ENCODE measurements at regions of chr5 and their contacts with region 1.

Region 1: DNA sequence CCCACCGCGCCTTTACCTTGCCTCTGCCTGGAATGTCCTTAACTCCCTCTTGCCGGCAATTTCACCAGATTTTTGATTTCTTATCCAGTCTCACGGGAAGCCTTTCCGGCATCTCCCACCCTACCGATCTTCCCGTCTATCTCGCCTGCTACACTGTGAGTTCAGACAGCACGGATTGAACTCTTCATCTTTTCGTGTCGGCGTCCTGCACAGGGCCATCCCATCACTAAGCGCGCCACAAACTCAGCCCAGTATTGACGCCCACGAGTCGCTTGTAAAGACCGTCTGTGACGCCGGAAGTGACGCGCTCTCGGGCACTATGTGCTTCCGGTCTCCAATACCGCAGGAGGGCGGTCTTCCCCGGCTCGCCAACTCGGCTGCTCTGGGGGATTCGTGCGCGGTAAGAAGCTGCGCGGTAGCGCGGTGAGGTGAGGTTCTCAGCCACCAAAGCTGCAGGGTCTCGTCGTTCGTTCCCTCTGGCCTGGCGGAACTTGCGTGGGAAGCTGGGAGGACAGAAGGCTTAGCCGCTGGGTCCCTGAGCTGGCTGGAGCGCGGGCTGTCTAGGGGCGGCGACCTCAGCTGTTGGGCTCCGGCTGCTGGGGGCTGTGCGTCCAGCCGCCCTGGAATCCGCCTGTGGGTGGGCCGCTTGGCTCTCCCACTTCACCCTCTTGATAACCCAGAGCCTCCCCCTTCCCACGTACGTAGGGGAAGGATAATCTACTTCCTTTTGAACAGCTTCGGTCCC is at the start of gene ZCCHC9:
- DNase-seq: peak; percentile 84 to 94 (median 90)
- ATAC-seq: peak; percentile 96
- H3K4me3 ChIP-seq: peak within 1 kb of the TSS; percentile 75
- H3K4me3 Mint-ChIP-seq: peak within 1 kb of the TSS; percentile 91 to 99 (median 96)
- H3K27ac ChIP-seq: peak within 1 kb of the TSS; percentile 96
- H3K27ac Mint-ChIP-seq: peak within 1 kb of the TSS; percentile 92 to 99 (median 98)
- H3K4me1 ChIP-seq: peaks cover 14 to 21% of the 10 kb centered on the region in 2 donors
- H3K4me1 Mint-ChIP-seq: peaks cover 34 to 73% (median 55%) of the 10 kb centered on the region in 7 donors
- H3K27me3 ChIP-seq: no peaks in the 10 kb centered on the region
- H3K27me3 Mint-ChIP-seq: no peaks in the 10 kb centered on the region
- total RNA-seq, gene ZCCHC9: 15.5 to 35.1 (median 27.5) TPM

Region 2: GRCh38 chr5:80255732-80256479 is 1045.5 kb before region 1 on chr5 and contains the start of gene SERINC5:
- CTCF ChIA-PET with region 1: no interaction called
- POLR2A ChIA-PET with region 1: no interaction called
- intact Hi-C with region 1: loop called in 1 of 2 experiments (anchors 5 kb)
- DNase-seq: peak; percentile 79 to 89 (median 86)
- ATAC-seq: peak; percentile 91
- H3K4me3 ChIP-seq: peak within 1 kb of the TSS; percentile 73
- H3K4me3 Mint-ChIP-seq: peak within 1 kb of the TSS; percentile 92 to 99 (median 96)
- H3K27ac ChIP-seq: peak within 1 kb of the TSS; percentile 88
- H3K27ac Mint-ChIP-seq: peak within 1 kb of the TSS; percentile 94 to 99 (median 98)
- H3K4me1 ChIP-seq: peaks cover 19 to 30% of the 10 kb centered on the region in 2 donors
- H3K4me1 Mint-ChIP-seq: peaks cover 40 to 56% (median 46%) of the 10 kb centered on the region in 7 donors
- H3K27me3 ChIP-seq: no peaks in the 10 kb centered on the region
- H3K27me3 Mint-ChIP-seq: no peaks in the 10 kb centered on the region
- total RNA-seq, gene SERINC5: 71.2 to 164 (median 163) TPM

Region 3: DNA sequence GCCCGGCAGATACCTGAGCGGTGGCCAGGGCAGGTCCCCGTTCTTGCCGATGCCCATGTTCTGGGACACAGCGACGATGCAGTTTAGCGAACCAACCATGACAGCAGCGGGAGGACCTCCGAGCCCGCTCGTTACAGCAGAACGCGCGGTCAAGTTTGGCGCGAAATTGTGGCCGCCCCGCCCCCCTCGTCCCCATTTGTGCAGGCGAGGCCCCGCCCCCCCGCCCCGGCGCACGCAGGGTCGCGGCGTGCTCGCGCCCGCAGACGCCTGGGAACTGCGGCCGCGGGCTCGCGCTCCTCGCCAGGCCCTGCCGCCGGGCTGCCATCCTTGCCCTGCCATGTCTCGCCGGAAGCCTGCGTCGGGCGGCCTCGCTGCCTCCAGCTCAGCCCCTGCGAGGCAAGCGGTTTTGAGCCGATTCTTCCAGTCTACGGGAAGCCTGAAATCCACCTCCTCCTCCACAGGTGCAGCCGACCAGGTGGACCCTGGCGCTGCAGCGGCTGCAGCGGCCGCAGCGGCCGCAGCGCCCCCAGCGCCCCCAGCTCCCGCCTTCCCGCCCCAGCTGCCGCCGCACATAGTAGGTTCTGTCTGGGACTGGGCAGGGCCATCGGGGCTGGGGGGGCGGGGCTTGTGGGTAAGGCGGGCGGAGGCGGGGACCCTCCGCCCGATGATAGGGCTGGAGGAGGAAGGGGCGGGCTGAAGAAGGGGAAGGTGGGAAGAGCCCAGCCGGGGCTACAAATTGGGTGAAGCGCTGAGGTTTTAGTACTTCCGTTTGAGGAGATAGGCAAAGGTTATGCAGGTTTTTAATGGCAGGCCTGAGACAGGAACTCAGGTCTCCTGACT is 646.8 kb before region 1 on chr5 and contains the starts of genes DHFR and MSH3:
- CTCF ChIA-PET with region 1: no interaction called
- POLR2A ChIA-PET with region 1: interaction called, 3 read pairs
- intact Hi-C with region 1: loop called (anchors 1 kb)
- DNase-seq: peak; percentile 73 to 91 (median 87)
- ATAC-seq: peak; percentile 86
- H3K4me3 ChIP-seq: peak within 1 kb of the TSS; percentile 91
- H3K4me3 Mint-ChIP-seq: peak within 1 kb of the TSS; percentile 82 to 98 (median 90)
- H3K27ac ChIP-seq: peak within 1 kb of the TSS; percentile 82
- H3K27ac Mint-ChIP-seq: peak within 1 kb of the TSS; percentile 89 to 97 (median 96)
- H3K4me1 ChIP-seq: peaks cover 24 to 28% of the 10 kb centered on the region in 2 donors
- H3K4me1 Mint-ChIP-seq: peaks cover 10 to 40% (median 32%) of the 10 kb centered on the region in 7 donors
- H3K27me3 ChIP-seq: no peaks in the 10 kb centered on the region
- H3K27me3 Mint-ChIP-seq: no peaks in the 10 kb centered on the region
- total RNA-seq, gene DHFR: 6.9 to 68.9 (median 17.0) TPM
- total RNA-seq, gene MSH3: 12.0 to 20.9 (median 16.7) TPM

Region 4: GRCh38 chr5:81247441-81247972 is 53.9 kb before region 1 on chr5:
- CTCF ChIA-PET with region 1: interaction called, 4 read pairs
- POLR2A ChIA-PET with region 1: interaction called, 3 read pairs
- intact Hi-C with region 1: loop called (anchors 5 to 10 kb)
- DNase-seq: no peak
- ATAC-seq: no peak
- H3K4me3 ChIP-seq: no peak overlapping the region
- H3K4me3 Mint-ChIP-seq: no peak overlapping the region
- H3K27ac ChIP-seq: no peak overlapping the region
- H3K27ac Mint-ChIP-seq: peak overlapping the region in 2 of 9 donors; percentile 4 to 38
- H3K4me1 ChIP-seq: no peaks in the 10 kb centered on the region
- H3K4me1 Mint-ChIP-seq: peaks cover 0 to 6% (median 0%) of the 10 kb centered on the region in 7 donors
- H3K27me3 ChIP-seq: no peaks in the 10 kb centered on the region
- H3K27me3 Mint-ChIP-seq: no peaks in the 10 kb centered on the region

Region 5: DNA sequence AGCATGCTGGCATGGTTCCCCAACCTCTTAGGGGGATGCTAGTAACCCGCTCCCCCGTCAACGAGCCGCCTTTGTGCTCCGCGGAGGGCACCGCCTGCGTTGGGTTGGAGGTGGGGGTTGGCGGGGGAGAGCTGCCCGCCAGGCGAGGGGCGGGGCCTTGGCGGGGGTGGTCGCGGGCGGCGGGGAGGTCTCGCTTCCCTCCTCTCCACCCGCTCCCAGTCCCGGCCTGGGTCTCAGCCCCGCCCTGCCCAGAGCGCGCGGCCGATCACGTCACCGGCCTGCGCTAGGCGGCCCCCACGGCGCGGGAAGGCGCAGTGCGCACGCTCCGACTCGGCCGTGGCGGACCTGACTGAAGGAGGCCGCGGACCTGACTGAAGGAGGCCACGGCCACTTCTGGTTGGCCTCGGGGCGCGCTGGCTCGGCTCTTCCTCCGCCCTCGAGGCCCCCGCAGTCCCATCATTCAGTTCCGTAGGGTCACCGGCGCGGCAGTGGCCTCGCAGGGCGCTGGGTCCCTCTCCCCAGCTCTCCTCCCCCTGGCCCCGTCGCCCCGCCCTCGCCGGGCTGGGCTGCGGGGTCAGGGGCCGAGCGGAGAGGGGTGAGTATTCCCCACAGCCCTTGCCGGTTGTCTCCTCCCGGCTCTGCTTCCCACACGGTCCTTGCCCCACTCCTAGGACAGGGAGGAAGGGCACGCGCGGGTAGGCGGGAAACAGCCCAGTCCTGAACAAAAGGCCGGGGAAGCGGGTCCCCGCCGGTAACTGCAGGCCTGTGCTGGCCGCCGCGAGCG is 670.5 kb after region 1 on chr5 and contains the start of gene ATG10:
- CTCF ChIA-PET with region 1: no interaction called
- POLR2A ChIA-PET with region 1: no interaction called
- intact Hi-C with region 1: loop called (anchors 1 kb)
- DNase-seq: peak; percentile 78 to 93 (median 84)
- ATAC-seq: peak; percentile 95
- H3K4me3 ChIP-seq: peak within 1 kb of the TSS; percentile 67
- H3K4me3 Mint-ChIP-seq: peak within 1 kb of the TSS; percentile 91 to 100 (median 97)
- H3K27ac ChIP-seq: peak within 1 kb of the TSS; percentile 97
- H3K27ac Mint-ChIP-seq: peak within 1 kb of the TSS; percentile 95 to 99 (median 99)
- H3K4me1 ChIP-seq: peaks cover 5 to 10% of the 10 kb centered on the region in 2 donors
- H3K4me1 Mint-ChIP-seq: peaks cover 9 to 40% (median 33%) of the 10 kb centered on the region in 7 donors
- H3K27me3 ChIP-seq: no peaks in the 10 kb centered on the region
- H3K27me3 Mint-ChIP-seq: no peaks in the 10 kb centered on the region
- total RNA-seq, gene ATG10: 6.4 to 9.6 (median 8.2) TPM

Region 6: DNA sequence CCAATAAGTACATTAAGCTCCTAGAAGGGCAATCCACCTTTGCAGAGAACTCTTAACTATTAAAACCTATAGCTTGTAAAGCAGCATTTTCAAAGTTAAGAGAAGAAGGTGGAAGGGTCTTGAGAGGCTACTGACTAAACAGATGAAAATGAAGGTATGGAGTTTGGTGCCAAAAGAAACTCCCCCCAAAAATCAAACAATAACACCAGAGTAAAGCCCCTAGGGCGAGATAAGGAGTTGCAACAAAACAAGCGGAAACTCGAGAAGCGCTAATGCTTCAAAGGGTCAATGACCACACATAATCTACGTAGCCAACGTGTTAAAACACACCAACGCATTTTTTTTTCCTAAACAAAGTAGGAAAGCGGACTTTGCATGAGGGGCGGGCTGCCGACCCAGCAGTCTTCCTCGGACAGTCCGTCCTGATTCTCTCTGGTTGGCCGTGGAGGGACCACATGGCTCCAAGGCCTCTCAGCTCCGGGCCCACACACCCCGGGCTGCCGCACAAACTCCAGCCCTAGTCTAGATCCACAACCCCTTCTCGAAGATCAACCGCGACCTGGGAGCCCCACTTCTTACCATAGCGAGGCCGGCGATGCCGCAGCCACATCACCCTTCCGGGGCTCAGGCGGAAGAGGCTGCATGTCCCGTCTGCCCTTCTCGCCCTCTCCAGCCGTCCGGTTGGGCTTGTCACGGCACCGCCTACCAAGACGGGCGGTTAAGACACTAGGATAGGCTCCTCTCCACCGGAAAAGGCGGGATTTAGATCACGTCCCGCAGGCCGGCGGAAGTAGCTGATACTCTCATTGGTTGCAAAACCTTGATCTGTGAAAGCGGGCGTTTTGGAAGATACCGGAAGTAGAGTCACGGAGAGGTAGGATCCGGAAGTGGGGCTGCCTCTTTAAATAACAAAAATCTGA is 1775.6 kb after region 1 on chr5 and contains the starts of genes TMEM167A and XRCC4:
- CTCF ChIA-PET with region 1: no interaction called
- POLR2A ChIA-PET with region 1: no interaction called
- intact Hi-C with region 1: loop called (anchors 1 to 2 kb)
- DNase-seq: peak; percentile 71 to 97 (median 94)
- ATAC-seq: peak; percentile 99
- H3K4me3 ChIP-seq: peak within 1 kb of the TSS; percentile 78
- H3K4me3 Mint-ChIP-seq: peak within 1 kb of the TSS; percentile 93 to 99 (median 98)
- H3K27ac ChIP-seq: peak within 1 kb of the TSS; percentile 83
- H3K27ac Mint-ChIP-seq: peak within 1 kb of the TSS; percentile 95 to 99 (median 97)
- H3K4me1 ChIP-seq: peaks cover 5 to 16% of the 10 kb centered on the region in 2 donors
- H3K4me1 Mint-ChIP-seq: peaks cover 35 to 65% (median 62%) of the 10 kb centered on the region in 7 donors
- H3K27me3 ChIP-seq: no peaks in the 10 kb centered on the region
- H3K27me3 Mint-ChIP-seq: no peaks in the 10 kb centered on the region
- total RNA-seq, gene TMEM167A: 39.5 to 73.4 (median 42.3) TPM
- total RNA-seq, gene XRCC4: 2.9 to 7.4 (median 4.7) TPM

Measured in naive thymus-derived CD4-positive, alpha-beta T cell (primary cell).